B cell (primary cell): ENCODE measurements at regions of chr17 and their contacts with region 1.

Region 1: DNA sequence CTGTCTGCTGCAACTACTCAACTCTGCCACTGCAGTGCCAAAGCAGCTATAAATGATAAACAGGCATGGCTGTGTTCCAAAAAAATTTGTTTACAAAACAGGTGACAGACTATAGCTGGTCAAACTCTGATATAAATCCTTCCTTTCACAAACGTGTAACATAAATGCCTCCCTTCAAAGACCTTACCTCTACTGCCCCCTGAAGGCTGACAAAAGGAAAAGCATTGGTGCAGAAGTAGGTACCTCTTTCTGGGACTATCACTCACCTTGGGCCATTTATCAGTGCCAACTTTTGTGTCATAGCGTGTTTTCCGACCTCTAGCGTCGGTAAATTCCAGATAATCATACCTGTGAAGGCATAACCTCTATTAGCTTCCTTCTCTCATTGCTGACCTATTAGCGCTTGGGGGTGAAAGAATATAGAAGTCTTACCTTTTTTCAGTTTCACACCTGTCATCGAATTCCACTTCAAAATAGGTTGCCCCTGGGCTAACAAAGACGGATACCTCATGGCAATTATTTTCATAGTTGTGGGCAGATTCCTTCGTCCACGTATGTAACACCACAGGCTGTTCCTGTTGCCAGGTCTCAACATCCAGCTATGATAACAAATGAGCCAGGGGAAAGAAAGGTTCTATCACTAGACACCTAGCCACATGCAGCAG is 67.9 kb downstream of the ZZEF1 start:
- DNase-seq: peak; percentile 75
- ATAC-seq: peak; percentile 53
- H3K4me3 ChIP-seq: no peak overlapping the region
- H3K4me3 Mint-ChIP-seq: peak overlapping the region; percentile 75
- H3K27ac ChIP-seq: peak overlapping the region; percentile 20 to 54
- H3K27ac Mint-ChIP-seq: peak overlapping the region; percentile 76
- H3K4me1 ChIP-seq: peaks cover 13 to 17% of the 10 kb centered on the region in 2 donors
- H3K4me1 Mint-ChIP-seq: peaks cover 18% of the 10 kb centered on the region
- H3K27me3 ChIP-seq: no peaks in the 10 kb centered on the region
- H3K27me3 Mint-ChIP-seq: no peaks in the 10 kb centered on the region
- CTCF ChIP-seq: peak; percentile 78

Region 2: DNA sequence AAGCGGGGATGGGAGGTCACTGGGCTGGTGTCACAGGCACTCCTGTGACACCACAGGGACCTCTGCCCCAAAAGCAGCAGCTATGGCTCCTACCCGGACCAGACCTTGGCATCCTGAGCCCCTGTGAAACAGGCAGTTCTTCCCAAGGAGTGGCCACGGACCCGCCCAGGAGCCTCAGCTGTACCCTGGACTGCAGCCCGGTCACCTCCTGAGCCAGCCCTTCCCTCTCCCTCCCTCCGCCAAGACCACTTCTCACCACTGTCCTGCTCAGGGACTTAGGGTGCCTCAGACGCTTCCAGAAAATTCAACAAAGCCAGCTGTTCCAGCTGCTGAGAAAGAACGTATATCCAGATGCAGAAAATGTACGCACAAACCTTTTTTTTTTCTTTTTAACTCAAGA is 215.0 kb before region 1 on chr17:
- CTCF ChIA-PET with region 1: interaction called, 10 read pairs
- POLR2A ChIA-PET with region 1: no interaction called
- intact Hi-C with region 1: loop called (anchors 1 kb)
- DNase-seq: no peak
- ATAC-seq: no peak
- H3K4me3 ChIP-seq: no peak overlapping the region
- H3K4me3 Mint-ChIP-seq: no peak overlapping the region
- H3K27ac ChIP-seq: no peak overlapping the region
- H3K27ac Mint-ChIP-seq: no peak overlapping the region
- H3K4me1 ChIP-seq: no peaks in the 10 kb centered on the region
- H3K4me1 Mint-ChIP-seq: no peaks in the 10 kb centered on the region
- H3K27me3 ChIP-seq: no peaks in the 10 kb centered on the region
- H3K27me3 Mint-ChIP-seq: no peaks in the 10 kb centered on the region
- CTCF ChIP-seq: no peak

Region 3: DNA sequence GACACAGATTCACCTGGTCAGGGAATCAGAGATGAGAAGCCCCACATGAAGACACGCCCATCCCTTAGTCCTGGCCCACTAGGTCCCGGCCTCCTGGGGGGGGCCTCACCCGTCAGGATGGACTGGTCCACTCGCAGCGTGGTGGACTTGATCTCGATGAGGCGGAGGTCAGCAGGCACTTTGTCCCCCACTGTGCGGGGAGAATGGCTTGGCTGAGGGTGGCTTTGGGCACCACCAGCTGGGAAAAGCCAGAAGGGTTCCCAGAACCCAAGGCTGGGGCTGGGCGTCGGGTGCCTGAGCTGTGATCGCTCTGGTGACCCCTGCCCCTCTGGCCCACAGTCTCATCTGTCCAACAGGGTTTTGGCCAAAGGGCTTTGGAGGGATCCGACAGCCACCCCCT is 124.4 kb before region 1 on chr17:
- CTCF ChIA-PET with region 1: no interaction called
- POLR2A ChIA-PET with region 1: interaction called, 14 read pairs
- intact Hi-C with region 1: no loop called
- DNase-seq: no peak
- ATAC-seq: no peak
- H3K4me3 ChIP-seq: no peak overlapping the region
- H3K4me3 Mint-ChIP-seq: no peak overlapping the region
- H3K27ac ChIP-seq: no peak overlapping the region
- H3K27ac Mint-ChIP-seq: no peak overlapping the region
- H3K4me1 ChIP-seq: peaks cover 0 to 10% of the 10 kb centered on the region in 2 donors
- H3K4me1 Mint-ChIP-seq: peaks cover 4% of the 10 kb centered on the region
- H3K27me3 ChIP-seq: no peaks in the 10 kb centered on the region
- H3K27me3 Mint-ChIP-seq: no peaks in the 10 kb centered on the region
- CTCF ChIP-seq: no peak